Heart left ventricle (tissue), 16 donors: ENCODE measurements at regions of chr12 and their contacts with region 1.

Region 1: DNA sequence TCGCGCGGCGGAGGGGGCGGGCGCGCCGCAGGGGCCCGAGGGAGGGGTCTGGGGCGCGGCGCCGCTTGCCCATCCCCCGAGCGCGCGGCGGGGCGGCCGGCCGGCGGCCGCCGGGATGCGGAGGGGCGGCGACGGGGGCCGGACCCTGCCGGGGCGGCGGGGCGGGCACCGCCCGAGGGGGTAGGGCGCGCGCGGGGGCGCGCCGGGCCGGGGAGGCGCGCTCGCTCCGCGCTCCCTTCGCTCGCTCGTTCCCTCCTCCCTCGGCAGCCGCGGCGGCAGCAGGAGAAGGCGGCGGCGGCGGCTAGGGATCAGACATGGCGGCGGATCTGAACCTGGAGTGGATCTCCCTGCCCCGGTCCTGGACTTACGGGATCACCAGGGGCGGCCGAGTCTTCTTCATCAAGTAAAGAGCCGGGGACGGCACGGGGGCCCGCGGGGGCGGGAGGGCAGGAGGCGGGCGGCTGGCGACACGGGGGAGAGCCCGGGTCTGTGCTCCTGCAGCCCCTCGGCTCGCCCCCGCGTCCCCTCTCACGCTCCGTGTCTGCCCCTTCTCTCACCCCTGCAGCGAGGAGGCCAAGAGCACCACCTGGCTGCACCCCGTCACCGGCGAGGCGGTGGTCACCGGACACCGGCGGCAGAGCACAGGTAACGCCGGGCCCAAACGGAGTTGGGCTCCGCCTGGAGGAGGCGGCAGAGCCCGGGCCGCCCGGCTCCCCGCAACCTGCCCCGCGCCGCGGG is at the start of gene PLEKHA5:
- DNase-seq: peak; percentile 77 to 88 (median 79)
- ATAC-seq: peak; percentile 43 to 94 (median 86)
- H3K4me3 ChIP-seq: peak within 1 kb of the TSS; percentile 70 to 96 (median 92)
- H3K27ac ChIP-seq: peak within 1 kb of the TSS; percentile 87 to 96 (median 94)
- H3K4me1 ChIP-seq: peaks cover 0 to 16% (median 0%) of the 10 kb centered on the region in 12 donors
- H3K27me3 ChIP-seq: no peaks in the 10 kb centered on the region
- CTCF ChIP-seq: peak in 8 of 12 donors; percentile 8 to 45 (median 26)
- POLR2A ChIP-seq: peak in 1 of 2 donors; percentile 30
- total RNA-seq, gene PLEKHA5: 43.7 to 72.2 (median 58.7) TPM

Region 2: GRCh38 chr12:18632848-18633247 is 496.8 kb before region 1 on chr12:
- intact Hi-C with region 1: no loop called
- DNase-seq: no peak
- ATAC-seq: no peak
- H3K4me3 ChIP-seq: no peak overlapping the region
- H3K27ac ChIP-seq: no peak overlapping the region
- H3K4me1 ChIP-seq: no peaks in the 10 kb centered on the region
- H3K27me3 ChIP-seq: no peaks in the 10 kb centered on the region
- CTCF ChIP-seq: no peak
- POLR2A ChIP-seq: no peak

Region 3: GRCh38 chr12:18752280-18752920 is 377.3 kb before region 1 on chr12:
- intact Hi-C with region 1: loop called in 1 of 10 experiments (anchors 5 kb)
- DNase-seq: peak in 4 of 5 donors; percentile 44 to 68 (median 51)
- ATAC-seq: peak in 3 of 4 donors; percentile 34 to 69 (median 43)
- H3K4me3 ChIP-seq: no peak overlapping the region
- H3K27ac ChIP-seq: peak overlapping the region; percentile 37 to 95 (median 78)
- H3K4me1 ChIP-seq: peaks cover 3 to 57% (median 21%) of the 10 kb centered on the region in 12 donors
- H3K27me3 ChIP-seq: no peaks in the 10 kb centered on the region
- CTCF ChIP-seq: no peak
- POLR2A ChIP-seq: no peak

Region 4: DNA sequence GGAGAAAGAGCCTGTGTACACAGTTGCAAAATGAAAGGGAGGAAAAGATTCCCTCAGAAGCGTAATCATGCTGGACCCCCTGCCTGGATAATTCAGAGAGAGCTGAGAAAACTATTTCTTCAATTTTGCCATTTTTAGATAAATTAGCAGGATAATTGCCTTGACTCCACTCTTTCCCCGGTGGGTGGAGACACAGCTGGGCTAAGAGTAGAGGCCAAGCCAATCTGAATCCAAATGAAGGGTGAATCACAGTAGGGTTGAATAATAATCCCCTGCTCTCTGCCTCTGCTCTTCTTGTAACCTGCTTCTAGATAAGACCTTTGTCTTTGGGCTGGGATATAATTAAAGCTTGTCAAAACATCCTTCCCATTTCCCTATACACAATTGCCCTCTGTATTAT is 241.6 kb before region 1 on chr12:
- intact Hi-C with region 1: loop called in 2 of 10 experiments (anchors 5 to 10 kb)
- DNase-seq: peak in 1 of 5 donors; percentile 33
- ATAC-seq: peak in 3 of 4 donors; percentile 49 to 76 (median 73)
- H3K4me3 ChIP-seq: no peak overlapping the region
- H3K27ac ChIP-seq: peak overlapping the region in 2 of 12 donors; percentile 28 to 40
- H3K4me1 ChIP-seq: peaks cover 0 to 13% (median 0%) of the 10 kb centered on the region in 12 donors
- H3K27me3 ChIP-seq: no peaks in the 10 kb centered on the region
- CTCF ChIP-seq: no peak
- POLR2A ChIP-seq: no peak

Region 5: DNA sequence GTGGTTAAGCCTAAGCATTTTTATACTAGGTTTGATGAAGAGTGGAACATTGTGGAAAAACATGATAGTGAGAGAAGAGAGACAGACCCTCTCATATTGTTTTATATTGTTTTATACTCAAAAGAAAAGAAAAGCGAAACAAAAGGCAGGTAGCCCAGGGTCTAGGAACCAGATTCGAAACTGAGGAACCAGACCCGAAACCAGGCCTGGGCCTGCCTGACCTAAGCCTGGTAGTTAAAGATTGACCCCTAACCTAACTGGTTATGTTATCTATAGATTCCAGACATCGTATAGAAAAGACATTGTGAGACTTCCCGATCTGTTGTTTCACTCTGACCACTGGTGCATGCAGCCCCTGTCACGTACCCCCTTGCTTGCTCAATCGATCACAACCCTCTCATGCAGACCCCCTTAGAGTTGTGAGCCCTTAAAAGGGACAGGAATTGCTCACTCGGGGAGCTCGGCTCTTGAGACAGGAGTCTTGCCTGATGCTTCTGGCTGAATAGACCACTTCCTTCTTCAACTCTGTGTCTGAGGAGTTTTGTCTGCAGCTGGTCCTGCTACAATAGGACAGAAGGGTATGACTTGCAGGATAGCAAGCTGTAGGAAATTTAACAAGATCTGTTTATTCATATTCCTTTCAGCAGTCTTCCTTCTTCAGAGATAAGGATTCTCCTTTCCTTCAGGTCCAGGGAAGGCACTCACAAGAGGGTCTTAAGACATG is 147.3 kb before region 1 on chr12:
- intact Hi-C with region 1: no loop called
- DNase-seq: no peak
- ATAC-seq: no peak
- H3K4me3 ChIP-seq: no peak overlapping the region
- H3K27ac ChIP-seq: no peak overlapping the region
- H3K4me1 ChIP-seq: no peaks in the 10 kb centered on the region
- H3K27me3 ChIP-seq: no peaks in the 10 kb centered on the region
- CTCF ChIP-seq: no peak
- POLR2A ChIP-seq: no peak

Region 6: GRCh38 chr12:19039515-19039914 is 90.1 kb before region 1 on chr12:
- intact Hi-C with region 1: loop called in 3 of 10 experiments (anchors 2 to 5 kb)
- DNase-seq: no peak
- ATAC-seq: peak in 3 of 4 donors; percentile 25 to 63 (median 53)
- H3K4me3 ChIP-seq: peak overlapping the region in 9 of 12 donors; percentile 28 to 50 (median 31)
- H3K27ac ChIP-seq: peak overlapping the region; percentile 55 to 86 (median 80)
- H3K4me1 ChIP-seq: peaks cover 0 to 46% (median 8%) of the 10 kb centered on the region in 12 donors
- H3K27me3 ChIP-seq: no peaks in the 10 kb centered on the region
- CTCF ChIP-seq: no peak
- POLR2A ChIP-seq: no peak

Region 7: DNA sequence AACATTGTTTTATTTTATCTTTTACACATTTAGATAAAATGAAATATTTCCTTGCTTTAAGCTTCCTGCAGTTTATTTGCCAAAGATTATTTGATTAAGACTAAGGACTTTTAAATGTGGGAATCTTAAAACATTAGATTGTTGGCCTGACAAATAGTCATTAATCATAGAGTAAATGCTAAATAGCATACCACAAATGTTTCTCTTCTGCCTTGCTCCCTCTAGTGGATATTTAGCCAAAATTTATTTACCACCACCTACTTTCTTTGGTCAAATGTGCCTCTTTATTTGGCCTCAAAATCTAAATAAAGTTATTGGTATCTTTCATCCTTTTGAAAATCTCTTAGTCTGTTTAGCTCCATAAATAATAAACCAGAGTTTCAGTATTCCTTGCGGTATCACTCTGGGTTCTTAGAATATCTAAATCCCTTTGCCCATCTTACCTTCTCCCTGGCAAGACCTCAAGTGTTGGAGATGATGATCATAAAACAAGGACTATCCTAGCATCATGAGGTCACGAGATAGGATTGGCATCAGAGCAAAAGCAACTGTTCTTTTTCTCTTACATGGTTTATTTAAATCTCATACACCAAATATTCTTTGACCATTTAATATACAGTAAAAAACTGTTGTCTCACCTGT is 159.1 kb after region 1 on chr12:
- intact Hi-C with region 1: loop called in 1 of 10 experiments (anchors 10 kb)
- DNase-seq: no peak
- ATAC-seq: peak in 1 of 4 donors; percentile 56
- H3K4me3 ChIP-seq: no peak overlapping the region
- H3K27ac ChIP-seq: no peak overlapping the region
- H3K4me1 ChIP-seq: peaks cover 0 to 5% (median 0%) of the 10 kb centered on the region in 12 donors
- H3K27me3 ChIP-seq: no peaks in the 10 kb centered on the region
- CTCF ChIP-seq: peak; percentile 48 to 73 (median 67)
- POLR2A ChIP-seq: no peak